ENCODE measurements at regions of chr6 and their contacts with region 1.

Region 1: GRCh38 chr6:142374965-142375733 is 73.3 kb downstream of the ADGRG6 start:
- DNase-seq: peak; percentile 61 to 77
- H3K4me3 ChIP-seq: no peak overlapping the region
- H3K4me3 Mint-ChIP-seq: peak overlapping the region; percentile 68
- H3K27ac Mint-ChIP-seq: peak overlapping the region; percentile 75
- H3K4me1 ChIP-seq: peaks cover 75% of the 10 kb centered on the region
- H3K4me1 Mint-ChIP-seq: peaks cover 58% of the 10 kb centered on the region
- H3K27me3 ChIP-seq: no peaks in the 10 kb centered on the region
- H3K27me3 Mint-ChIP-seq: no peaks in the 10 kb centered on the region
- CTCF ChIP-seq: no peak

Region 2: GRCh38 chr6:142236691-142237090 is 138.5 kb before region 1 on chr6:
- CTCF ChIA-PET with region 1: no interaction called
- POLR2A ChIA-PET with region 1: no interaction called
- intact Hi-C with region 1: loop called (anchors 1 kb)
- DNase-seq: no peak
- H3K4me3 ChIP-seq: no peak overlapping the region
- H3K4me3 Mint-ChIP-seq: no peak overlapping the region
- H3K27ac Mint-ChIP-seq: no peak overlapping the region
- H3K4me1 ChIP-seq: peaks cover 12% of the 10 kb centered on the region
- H3K4me1 Mint-ChIP-seq: peaks cover 6% of the 10 kb centered on the region
- H3K27me3 ChIP-seq: no peaks in the 10 kb centered on the region
- H3K27me3 Mint-ChIP-seq: no peaks in the 10 kb centered on the region
- CTCF ChIP-seq: no peak

Region 3: GRCh38 chr6:142292166-142292924 is 82.8 kb before region 1 on chr6:
- CTCF ChIA-PET with region 1: no interaction called
- POLR2A ChIA-PET with region 1: no interaction called
- intact Hi-C with region 1: loop called (anchors 1 kb)
- DNase-seq: peak; percentile 72 to 73
- H3K4me3 ChIP-seq: no peak overlapping the region
- H3K4me3 Mint-ChIP-seq: no peak overlapping the region
- H3K27ac Mint-ChIP-seq: peak overlapping the region; percentile 84
- H3K4me1 ChIP-seq: peaks cover 43% of the 10 kb centered on the region
- H3K4me1 Mint-ChIP-seq: peaks cover 50% of the 10 kb centered on the region
- H3K27me3 ChIP-seq: no peaks in the 10 kb centered on the region
- H3K27me3 Mint-ChIP-seq: no peaks in the 10 kb centered on the region
- CTCF ChIP-seq: no peak

Region 4: GRCh38 chr6:142307963-142308748 is 67.0 kb before region 1 on chr6:
- CTCF ChIA-PET with region 1: no interaction called
- POLR2A ChIA-PET with region 1: no interaction called
- intact Hi-C with region 1: loop called (anchors 1 kb)
- DNase-seq: no peak
- H3K4me3 ChIP-seq: no peak overlapping the region
- H3K4me3 Mint-ChIP-seq: peak overlapping the region; percentile 24
- H3K27ac Mint-ChIP-seq: no peak overlapping the region
- H3K4me1 ChIP-seq: peaks cover 78% of the 10 kb centered on the region
- H3K4me1 Mint-ChIP-seq: peaks cover 40% of the 10 kb centered on the region
- H3K27me3 ChIP-seq: no peaks in the 10 kb centered on the region
- H3K27me3 Mint-ChIP-seq: no peaks in the 10 kb centered on the region
- CTCF ChIP-seq: no peak

Region 5: GRCh38 chr6:142323377-142324040 is 51.6 kb before region 1 on chr6:
- CTCF ChIA-PET with region 1: no interaction called
- POLR2A ChIA-PET with region 1: interaction called, 3 read pairs
- intact Hi-C with region 1: loop called (anchors 1 kb)
- DNase-seq: peak; percentile 49 to 80
- H3K4me3 ChIP-seq: no peak overlapping the region
- H3K4me3 Mint-ChIP-seq: peak overlapping the region; percentile 29
- H3K27ac Mint-ChIP-seq: peak overlapping the region; percentile 80
- H3K4me1 ChIP-seq: peaks cover 70% of the 10 kb centered on the region
- H3K4me1 Mint-ChIP-seq: peaks cover 52% of the 10 kb centered on the region
- H3K27me3 ChIP-seq: no peaks in the 10 kb centered on the region
- H3K27me3 Mint-ChIP-seq: no peaks in the 10 kb centered on the region
- CTCF ChIP-seq: no peak

Region 6: GRCh38 chr6:142331075-142331551 is 44.0 kb before region 1 on chr6:
- CTCF ChIA-PET with region 1: no interaction called
- POLR2A ChIA-PET with region 1: no interaction called
- intact Hi-C with region 1: loop called (anchors 2 kb)
- DNase-seq: peak in 1 of 2 experiments; percentile 50
- H3K4me3 ChIP-seq: no peak overlapping the region
- H3K4me3 Mint-ChIP-seq: peak overlapping the region; percentile 4
- H3K27ac Mint-ChIP-seq: peak overlapping the region; percentile 42
- H3K4me1 ChIP-seq: peaks cover 50% of the 10 kb centered on the region; the same call in 1 of the 2 replicates
- H3K4me1 Mint-ChIP-seq: peaks cover 45% of the 10 kb centered on the region
- H3K27me3 ChIP-seq: no peaks in the 10 kb centered on the region
- H3K27me3 Mint-ChIP-seq: no peaks in the 10 kb centered on the region
- CTCF ChIP-seq: no peak

Region 7: GRCh38 chr6:142361782-142362750 is 13.1 kb before region 1 on chr6:
- CTCF ChIA-PET with region 1: no interaction called
- POLR2A ChIA-PET with region 1: no interaction called
- intact Hi-C with region 1: loop called (anchors 1 kb)
- DNase-seq: peak; percentile 63 to 69
- H3K4me3 ChIP-seq: no peak overlapping the region
- H3K4me3 Mint-ChIP-seq: peak overlapping the region; percentile 70
- H3K27ac Mint-ChIP-seq: peak overlapping the region; percentile 74
- H3K4me1 ChIP-seq: peaks cover 59% of the 10 kb centered on the region
- H3K4me1 Mint-ChIP-seq: peaks cover 25% of the 10 kb centered on the region
- H3K27me3 ChIP-seq: no peaks in the 10 kb centered on the region
- H3K27me3 Mint-ChIP-seq: no peaks in the 10 kb centered on the region
- CTCF ChIP-seq: no peak

Region 8: GRCh38 chr6:142469220-142469619 is 94.1 kb after region 1 on chr6:
- CTCF ChIA-PET with region 1: no interaction called
- POLR2A ChIA-PET with region 1: no interaction called
- intact Hi-C with region 1: no loop called
- DNase-seq: no peak
- H3K4me3 ChIP-seq: no peak overlapping the region
- H3K4me3 Mint-ChIP-seq: no peak overlapping the region
- H3K27ac Mint-ChIP-seq: no peak overlapping the region
- H3K4me1 ChIP-seq: no peaks in the 10 kb centered on the region
- H3K4me1 Mint-ChIP-seq: no peaks in the 10 kb centered on the region
- H3K27me3 ChIP-seq: no peaks in the 10 kb centered on the region
- H3K27me3 Mint-ChIP-seq: peaks cover 9% of the 10 kb centered on the region
- CTCF ChIP-seq: no peak

Measured in Caco-2 (cell line).